Sigmoid colon (tissue), 7 donors: ENCODE measurements at regions of chr4 and their contacts with region 1.

Region 1: DNA sequence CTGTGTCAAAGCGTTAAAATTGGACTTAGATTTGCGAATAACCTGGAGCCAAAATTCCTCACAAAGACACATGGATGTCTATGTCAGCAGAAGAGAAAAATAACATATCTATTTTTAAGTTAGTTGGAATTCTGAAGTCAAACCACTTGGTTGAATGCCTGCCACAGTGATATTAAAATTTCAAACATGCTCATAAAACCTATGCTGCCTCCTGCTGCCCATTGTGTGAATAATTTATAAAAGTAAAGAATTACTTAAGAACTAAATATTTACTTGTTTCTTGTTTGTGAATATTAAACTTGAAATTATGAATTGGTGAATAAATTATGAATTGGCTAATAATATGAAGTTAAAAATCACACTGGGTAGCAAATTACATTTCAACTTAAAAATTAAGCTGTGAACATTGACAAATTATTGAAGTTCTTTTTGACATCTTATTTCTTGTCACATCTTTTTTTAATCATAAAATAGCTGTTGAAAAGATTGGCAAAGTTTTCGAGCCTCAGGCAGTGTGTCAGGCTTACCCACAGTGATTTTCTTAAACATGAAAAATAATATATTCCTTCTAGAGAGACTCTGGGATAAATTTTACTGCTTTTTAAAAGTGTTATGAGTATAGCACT is 35.4 kb downstream of the FABP2 start:
- DNase-seq: no peak
- H3K4me3 ChIP-seq: no peak overlapping the region
- H3K27ac ChIP-seq: peak overlapping the region in 1 of 4 donors; percentile 60
- H3K4me1 ChIP-seq: peaks cover 0 to 31% (median 14%) of the 10 kb centered on the region in 4 donors
- H3K27me3 ChIP-seq: no peaks in the 10 kb centered on the region
- CTCF ChIP-seq: peak; percentile 41 to 61 (median 52)
- EP300 ChIP-seq: no peak
- POLR2A ChIP-seq: no peak

Region 2: GRCh38 chr4:118740869-118741268 is 545.6 kb before region 1 on chr4:
- intact Hi-C with region 1: loop called (anchors 5 kb)
- DNase-seq: no peak
- H3K4me3 ChIP-seq: peak overlapping the region; percentile 11 to 21 (median 16)
- H3K27ac ChIP-seq: peak overlapping the region; percentile 48 to 88 (median 85)
- H3K4me1 ChIP-seq: peaks cover 0 to 93% (median 56%) of the 10 kb centered on the region in 4 donors
- H3K27me3 ChIP-seq: no peaks in the 10 kb centered on the region
- CTCF ChIP-seq: peak in 2 of 4 experiments; percentile 20 to 47
- EP300 ChIP-seq: no peak
- POLR2A ChIP-seq: no peak

Region 3: DNA sequence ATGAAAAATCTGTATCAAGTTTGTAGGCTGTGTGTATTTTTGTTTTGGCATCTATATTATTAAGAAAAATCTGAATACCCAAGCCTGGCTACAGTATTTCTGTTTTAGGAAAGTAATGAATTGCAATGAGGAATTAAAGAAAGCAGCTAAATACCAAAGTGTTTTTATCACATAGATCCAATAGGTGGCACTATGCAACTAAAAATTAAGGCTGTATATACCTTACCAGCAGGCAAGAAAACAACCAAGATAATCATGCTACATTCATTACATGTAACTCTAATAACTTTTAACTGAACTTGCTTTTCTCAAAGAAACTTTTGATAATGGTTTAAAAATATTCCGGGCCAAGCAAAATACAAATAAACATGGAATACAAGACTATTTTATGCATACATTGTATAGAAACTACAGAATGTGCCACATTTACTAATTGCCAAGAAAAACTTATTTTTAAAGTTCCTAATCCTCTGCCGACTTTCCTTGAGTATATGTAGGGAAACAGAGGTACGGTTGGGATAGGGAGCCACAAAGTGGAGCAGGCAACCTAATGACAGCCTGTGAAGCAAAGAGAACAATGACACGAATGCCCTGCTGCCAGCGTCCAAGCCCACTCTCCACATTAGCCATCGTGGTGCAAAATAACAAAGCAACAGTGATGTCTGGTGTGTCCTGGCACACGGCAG is 514.3 kb before region 1 on chr4:
- intact Hi-C with region 1: loop called (anchors 2 kb)
- DNase-seq: no peak
- H3K4me3 ChIP-seq: peak overlapping the region in 3 of 4 donors; percentile 10 to 28 (median 22)
- H3K27ac ChIP-seq: peak overlapping the region; percentile 83 to 88 (median 85)
- H3K4me1 ChIP-seq: peaks cover 0 to 68% (median 51%) of the 10 kb centered on the region in 4 donors
- H3K27me3 ChIP-seq: no peaks in the 10 kb centered on the region
- CTCF ChIP-seq: peak; percentile 47 to 68 (median 64)
- EP300 ChIP-seq: no peak
- POLR2A ChIP-seq: no peak

Region 4: DNA sequence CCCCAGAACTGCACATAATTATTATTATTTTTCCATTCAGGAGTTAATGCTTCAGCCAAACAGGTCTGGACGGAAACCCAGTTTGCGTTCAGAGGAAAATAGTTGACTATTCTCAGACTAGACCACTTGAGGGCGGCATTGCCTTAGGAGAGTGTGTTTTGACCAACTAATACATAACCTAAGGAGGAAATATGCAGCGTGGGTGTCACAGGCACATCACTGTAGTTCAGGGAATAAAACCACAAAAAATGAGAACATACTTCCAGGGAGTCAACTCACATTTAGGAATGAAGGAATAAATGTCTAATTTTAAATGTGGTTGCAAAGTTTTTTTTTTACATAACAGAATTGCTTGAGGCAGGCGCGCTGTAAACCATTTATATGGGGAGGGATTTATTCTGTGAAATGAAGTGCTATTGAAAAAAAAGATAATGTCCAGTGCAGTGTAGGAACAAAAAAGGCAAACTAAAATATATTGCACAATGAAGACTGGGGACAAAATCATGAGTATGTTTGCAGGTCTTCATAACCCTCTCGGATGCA is 304.6 kb before region 1 on chr4:
- intact Hi-C with region 1: loop called (anchors 2 kb)
- DNase-seq: peak; percentile 86
- H3K4me3 ChIP-seq: peak overlapping the region in 3 of 4 donors; percentile 12 to 17 (median 15)
- H3K27ac ChIP-seq: peak overlapping the region; percentile 84 to 90 (median 87)
- H3K4me1 ChIP-seq: peaks cover 0 to 91% (median 67%) of the 10 kb centered on the region in 4 donors
- H3K27me3 ChIP-seq: no peaks in the 10 kb centered on the region
- CTCF ChIP-seq: peak; percentile 63 to 90 (median 73)
- EP300 ChIP-seq: no peak
- POLR2A ChIP-seq: no peak

Region 5: GRCh38 chr4:119041951-119042560 is 244.4 kb before region 1 on chr4:
- intact Hi-C with region 1: loop called (anchors 5 kb)
- DNase-seq: peak; percentile 79
- H3K4me3 ChIP-seq: no peak overlapping the region
- H3K27ac ChIP-seq: peak overlapping the region; percentile 18 to 98 (median 89)
- H3K4me1 ChIP-seq: peaks cover 0 to 86% (median 60%) of the 10 kb centered on the region in 4 donors
- H3K27me3 ChIP-seq: no peaks in the 10 kb centered on the region
- CTCF ChIP-seq: peak; percentile 34 to 72 (median 70)
- EP300 ChIP-seq: no peak
- POLR2A ChIP-seq: no peak

Region 6: DNA sequence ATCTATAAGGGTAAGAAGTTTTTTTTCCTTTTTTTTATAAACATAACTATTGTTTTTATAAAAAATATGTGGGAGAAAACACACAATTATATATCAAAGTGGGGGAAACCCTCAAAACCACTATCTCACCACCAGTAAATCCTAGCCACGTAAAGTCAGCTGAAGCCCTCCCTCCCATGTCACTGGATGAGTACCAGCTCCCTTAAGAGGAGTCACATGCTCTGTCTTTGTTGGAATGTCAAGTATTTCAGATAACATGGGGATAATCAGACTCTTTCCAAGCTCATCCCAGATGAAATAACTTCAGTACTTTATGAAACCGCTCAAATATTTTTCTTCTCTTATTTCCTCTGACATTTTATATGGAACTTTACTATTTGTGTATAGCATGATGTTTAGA is 148.4 kb before region 1 on chr4:
- intact Hi-C with region 1: no loop called
- DNase-seq: no peak
- H3K4me3 ChIP-seq: no peak overlapping the region
- H3K27ac ChIP-seq: no peak overlapping the region
- H3K4me1 ChIP-seq: peaks cover 0 to 14% (median 1%) of the 10 kb centered on the region in 4 donors
- H3K27me3 ChIP-seq: no peaks in the 10 kb centered on the region
- CTCF ChIP-seq: no peak
- EP300 ChIP-seq: no peak
- POLR2A ChIP-seq: no peak

Region 7: GRCh38 chr4:119212234-119212963 is 74.1 kb before region 1 on chr4 and contains the start of gene USP53:
- intact Hi-C with region 1: loop called (anchors 5 kb)
- DNase-seq: peak; percentile 99
- H3K4me3 ChIP-seq: peak within 1 kb of the TSS; percentile 52 to 90 (median 74)
- H3K27ac ChIP-seq: peak within 1 kb of the TSS; percentile 92 to 97 (median 94)
- H3K4me1 ChIP-seq: peaks cover 0 to 9% (median 0%) of the 10 kb centered on the region in 4 donors
- H3K27me3 ChIP-seq: no peaks in the 10 kb centered on the region
- CTCF ChIP-seq: no peak
- EP300 ChIP-seq: peak in 1 of 4 donors; percentile 48
- POLR2A ChIP-seq: peak; percentile 74 to 91
- total RNA-seq, gene USP53: 31.1 to 64.0 (median 46.7) TPM